ENCODE measurements at regions of chr14 and their contacts with region 1.

Region 1: GRCh38 chr14:74612350-74613021 is 449 bp upstream of the LTBP2 start:
- DNase-seq: peak; percentile 91

Region 2: DNA sequence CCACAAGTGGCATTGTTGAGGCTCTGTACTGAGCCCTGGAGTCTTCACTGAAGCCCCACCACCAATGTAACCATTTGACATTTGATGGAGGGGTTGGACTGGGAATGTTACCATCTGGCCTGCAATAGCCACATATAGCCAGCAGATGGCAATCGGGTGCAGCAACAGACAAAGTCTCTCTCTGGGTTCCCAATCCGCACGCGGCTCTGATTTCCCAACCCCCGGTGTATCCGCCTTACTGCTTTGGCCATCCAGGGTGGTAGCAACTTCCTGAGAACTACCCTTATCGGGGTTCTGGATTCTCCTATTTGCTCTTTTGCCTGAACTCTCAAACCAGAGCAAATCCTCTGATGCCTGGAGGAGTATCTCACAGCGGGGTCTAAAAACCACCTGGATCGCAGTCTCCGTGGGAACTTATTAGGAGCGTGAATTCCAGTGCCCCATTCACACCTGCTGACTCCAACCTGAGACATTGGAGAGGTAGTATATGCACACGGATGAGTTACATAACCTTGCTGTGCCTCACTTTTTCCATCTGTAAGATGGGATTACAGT is 250.0 kb before region 1 on chr14:
- intact Hi-C with region 1: loop called (anchors 10 kb)
- DNase-seq: peak; percentile 82

Region 3: GRCh38 chr14:74501135-74501614 is 111.3 kb before region 1 on chr14:
- intact Hi-C with region 1: loop called (anchors 5 kb)
- DNase-seq: no peak

Region 4: GRCh38 chr14:74712499-74713394 is 100.3 kb after region 1 on chr14 and contains the starts of genes AREL1 and FCF1:
- intact Hi-C with region 1: loop called (anchors 5 kb)
- DNase-seq: peak; percentile 92
- total RNA-seq, gene AREL1: 21.2 TPM
- total RNA-seq, gene FCF1: 36.6 TPM

Region 5: GRCh38 chr14:74804219-74804826 is 191.8 kb after region 1 on chr14:
- intact Hi-C with region 1: loop called (anchors 5 kb)
- DNase-seq: no peak

Region 6: GRCh38 chr14:74824997-74825396 is 212.5 kb after region 1 on chr14:
- intact Hi-C with region 1: no loop called
- DNase-seq: no peak